ENCODE measurements at regions of chr1 and their contacts with region 1.

Region 1: GRCh38 chr1:51569284-51570062 is 47.4 kb upstream of the OSBPL9 start:
- DNase-seq: no peak
- ATAC-seq: peak; percentile 36 to 60
- H3K4me3 ChIP-seq: no peak overlapping the region
- H3K27ac ChIP-seq: peak overlapping the region; percentile 10 to 78 (median 70)
- H3K4me1 ChIP-seq: peaks cover 53 to 58% of the 10 kb centered on the region in 2 donors
- H3K27me3 ChIP-seq: no peaks in the 10 kb centered on the region
- CTCF ChIP-seq: no peak
- POLR2A ChIP-seq: no peak

Region 2: GRCh38 chr1:50955116-50955515 is 614.4 kb before region 1 on chr1:
- in situ Hi-C with region 1: no loop called
- intact Hi-C with region 1: no loop called
- DNase-seq: no peak
- ATAC-seq: no peak
- H3K4me3 ChIP-seq: no peak overlapping the region
- H3K27ac ChIP-seq: no peak overlapping the region
- H3K4me1 ChIP-seq: peaks cover 7 to 21% of the 10 kb centered on the region in 2 donors
- H3K27me3 ChIP-seq: no peaks in the 10 kb centered on the region
- CTCF ChIP-seq: no peak
- POLR2A ChIP-seq: no peak

Region 3: DNA sequence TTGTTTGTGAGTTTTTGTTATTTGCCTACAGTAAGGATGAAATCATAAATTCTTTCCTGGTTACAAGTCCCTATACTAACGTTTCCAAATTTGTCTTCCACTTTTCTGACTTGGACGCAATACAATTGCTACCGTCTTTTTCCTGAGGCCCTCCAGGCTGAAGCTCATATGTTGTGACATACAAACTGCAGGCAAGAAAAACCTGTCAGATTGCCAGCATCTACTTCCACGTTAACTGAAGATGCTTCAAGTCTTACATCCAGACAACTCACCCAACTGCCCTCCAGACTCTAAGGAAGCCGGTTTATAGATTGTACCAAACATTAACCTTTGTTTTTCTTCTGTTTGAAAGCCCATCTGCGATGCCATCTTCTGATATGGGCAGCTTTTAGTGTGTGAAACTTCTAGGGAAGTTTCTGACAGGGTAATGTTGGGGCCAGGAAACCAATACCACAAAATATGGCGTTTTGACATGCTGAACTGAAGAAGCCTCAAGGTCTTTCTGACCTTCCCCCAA is 354.8 kb before region 1 on chr1:
- in situ Hi-C with region 1: no loop called
- intact Hi-C with region 1: no loop called
- DNase-seq: no peak
- ATAC-seq: no peak
- H3K4me3 ChIP-seq: no peak overlapping the region
- H3K27ac ChIP-seq: no peak overlapping the region
- H3K4me1 ChIP-seq: no peaks in the 10 kb centered on the region
- H3K27me3 ChIP-seq: no peaks in the 10 kb centered on the region
- CTCF ChIP-seq: no peak
- POLR2A ChIP-seq: no peak

Region 4: GRCh38 chr1:51648180-51649109 is 79.0 kb after region 1 on chr1:
- in situ Hi-C with region 1: no loop called
- intact Hi-C with region 1: no loop called
- DNase-seq: no peak
- ATAC-seq: peak; percentile 61 to 79
- H3K4me3 ChIP-seq: peak overlapping the region in 1 of 4 donors; percentile 11
- H3K27ac ChIP-seq: peak overlapping the region; percentile 75 to 99 (median 82)
- H3K4me1 ChIP-seq: peaks cover 83 to 85% of the 10 kb centered on the region in 2 donors
- H3K27me3 ChIP-seq: no peaks in the 10 kb centered on the region
- CTCF ChIP-seq: no peak
- POLR2A ChIP-seq: no peak

Region 5: DNA sequence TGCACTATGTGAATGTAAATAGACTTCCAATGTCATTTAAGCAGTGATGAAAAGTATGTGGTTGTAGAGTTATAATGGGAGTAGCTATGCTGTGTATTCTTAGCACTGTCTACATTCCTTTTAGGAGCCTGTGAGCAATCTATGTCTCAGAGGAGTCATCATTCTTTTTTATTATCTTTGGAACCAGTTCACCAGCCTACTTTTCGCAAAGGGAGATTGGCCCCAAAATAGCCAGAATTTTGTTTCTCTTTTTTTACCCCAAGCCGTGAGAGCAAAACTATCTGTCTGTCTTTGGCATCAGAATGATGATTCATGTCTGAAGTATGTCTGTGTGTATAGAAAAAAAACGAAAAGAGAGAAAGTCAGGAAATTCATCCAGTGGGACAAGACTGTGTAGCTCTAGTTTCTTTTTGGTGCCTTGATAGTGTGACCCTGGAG is 91.6 kb after region 1 on chr1:
- in situ Hi-C with region 1: no loop called
- intact Hi-C with region 1: loop called (anchors 10 kb)
- DNase-seq: no peak
- ATAC-seq: peak; percentile 83 to 90
- H3K4me3 ChIP-seq: peak overlapping the region in 1 of 4 donors; percentile 3
- H3K27ac ChIP-seq: peak overlapping the region; percentile 66 to 79 (median 76)
- H3K4me1 ChIP-seq: peaks cover 88 to 95% of the 10 kb centered on the region in 2 donors
- H3K27me3 ChIP-seq: no peaks in the 10 kb centered on the region
- CTCF ChIP-seq: no peak
- POLR2A ChIP-seq: no peak

Measured in gastrocnemius medialis (tissue), 4 donors.